ENCODE measurements at regions of chr14 and their contacts with region 1.

Region 1: DNA sequence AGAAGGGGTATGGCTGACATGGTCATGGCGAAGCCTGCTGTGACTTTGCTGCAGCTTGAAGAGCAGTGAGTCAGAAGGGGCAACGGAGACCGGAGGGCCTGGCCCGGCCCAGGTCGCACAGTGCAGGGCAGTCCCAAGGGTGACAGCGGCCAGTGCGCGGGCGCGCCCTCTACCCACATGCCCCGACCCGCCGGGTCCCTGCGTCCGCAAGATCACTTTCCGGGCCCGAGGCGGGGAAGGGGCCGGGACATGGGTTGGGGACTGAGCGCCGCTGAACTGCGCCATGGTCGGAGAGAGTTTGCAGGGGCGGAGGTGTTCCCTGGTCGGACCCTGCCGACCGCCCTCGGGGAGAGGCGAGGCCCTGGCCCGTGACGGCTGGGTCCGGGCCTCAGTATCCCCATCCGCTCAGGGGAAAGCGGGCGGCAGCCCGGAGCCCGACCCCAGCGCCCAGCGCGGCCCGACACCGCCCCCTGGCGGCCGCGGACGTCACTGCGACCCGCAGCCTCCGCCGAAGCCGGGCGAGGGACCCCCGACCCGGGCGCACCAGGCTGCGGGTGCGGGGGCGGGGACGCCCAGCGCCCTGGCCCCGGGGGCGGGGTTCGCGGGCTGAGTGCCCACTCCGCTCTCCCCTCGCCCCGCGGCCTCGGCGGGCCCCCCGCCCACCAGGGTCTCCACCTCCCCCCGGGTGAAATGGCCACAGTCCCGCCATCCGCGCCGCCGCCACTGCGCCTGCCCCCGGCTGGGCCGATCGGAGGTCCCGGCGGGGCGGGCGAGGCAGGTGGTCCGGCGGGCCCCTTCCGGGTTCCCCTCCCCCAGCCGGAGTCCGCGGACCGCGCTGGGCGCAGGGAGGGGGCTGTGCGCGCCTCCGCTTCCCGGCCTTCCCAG is 7.2 kb upstream of the ANKRD9 start:
- DNase-seq: peak; percentile 42
- H3K4me3 ChIP-seq: peak overlapping the region; percentile 46 to 56 (median 55)
- H3K27ac ChIP-seq: no peak overlapping the region
- H3K4me1 ChIP-seq: no peaks in the 10 kb centered on the region
- H3K27me3 ChIP-seq: no peaks in the 10 kb centered on the region
- CTCF ChIP-seq: peak; percentile 75 to 85
- POLR2A ChIP-seq: no peak

Region 2: DNA sequence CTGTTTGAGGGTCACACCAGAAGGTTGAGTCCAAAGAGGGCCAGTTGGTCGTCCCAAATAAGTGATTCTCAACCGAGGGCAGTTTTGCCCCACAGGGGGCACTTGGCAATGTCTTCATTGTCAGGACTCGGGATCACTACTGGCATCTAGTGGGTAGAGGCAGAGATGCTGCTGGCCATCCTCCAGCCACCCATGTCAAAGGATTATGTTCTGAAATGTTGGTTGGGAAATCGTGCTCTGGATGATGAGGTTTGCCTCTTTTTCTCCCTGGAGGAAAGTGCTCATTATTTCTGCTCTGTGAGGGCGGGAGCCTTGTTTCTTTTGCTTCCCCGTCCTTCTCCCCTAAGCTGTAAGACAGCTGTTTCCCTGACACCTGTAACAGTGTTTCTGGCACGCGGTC is 193.7 kb before region 1 on chr14:
- CTCF ChIA-PET with region 1: interaction called, 7 read pairs
- POLR2A ChIA-PET with region 1: no interaction called
- dilution Hi-C with region 1: no loop called
- intact Hi-C with region 1: loop called (anchors 2 kb)
- DNase-seq: peak; percentile 71
- H3K4me3 ChIP-seq: no peak overlapping the region
- H3K27ac ChIP-seq: no peak overlapping the region
- H3K4me1 ChIP-seq: peaks cover 10% of the 10 kb centered on the region
- H3K27me3 ChIP-seq: no peaks in the 10 kb centered on the region
- CTCF ChIP-seq: peak; percentile 60 to 79
- POLR2A ChIP-seq: no peak

Region 3: GRCh38 chr14:102408724-102409123 is 108.0 kb before region 1 on chr14:
- CTCF ChIA-PET with region 1: no interaction called
- POLR2A ChIA-PET with region 1: no interaction called
- dilution Hi-C with region 1: no loop called
- intact Hi-C with region 1: no loop called
- DNase-seq: no peak
- H3K4me3 ChIP-seq: no peak overlapping the region
- H3K27ac ChIP-seq: no peak overlapping the region
- H3K4me1 ChIP-seq: no peaks in the 10 kb centered on the region
- H3K27me3 ChIP-seq: no peaks in the 10 kb centered on the region
- CTCF ChIP-seq: no peak
- POLR2A ChIP-seq: no peak

Region 4: DNA sequence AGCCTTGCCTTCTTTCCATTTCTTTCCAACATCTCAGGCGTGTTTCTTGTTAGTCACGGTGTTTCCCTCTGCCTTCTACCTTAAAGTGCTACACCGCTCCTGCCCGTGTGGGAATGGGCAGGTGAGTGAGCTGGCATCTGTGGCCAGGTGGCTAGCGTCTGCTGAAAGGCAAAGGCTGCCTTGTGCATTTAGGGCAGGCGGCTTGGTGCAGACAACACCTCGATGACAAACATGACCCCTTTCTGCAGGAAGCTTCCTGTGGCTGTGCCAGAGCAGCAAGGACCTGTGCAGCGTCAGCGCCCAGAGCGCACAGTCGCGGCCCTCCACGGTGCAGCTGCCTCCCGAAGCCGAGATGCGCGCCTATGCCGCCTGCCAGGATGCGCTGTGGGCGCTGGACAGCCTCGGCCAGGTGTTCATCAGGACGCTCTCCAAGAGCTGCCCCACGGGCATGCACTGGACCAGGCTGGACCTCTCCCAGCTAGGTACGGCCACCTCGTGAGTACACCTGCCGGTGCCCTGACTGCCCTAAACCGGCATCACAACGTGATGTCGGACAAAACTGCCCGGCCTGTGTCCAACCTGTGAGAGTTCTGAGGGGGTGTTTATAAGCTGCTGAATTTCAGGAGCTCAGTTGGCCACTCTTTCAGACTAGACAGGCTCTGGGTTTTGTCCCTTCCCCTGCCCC is 64.5 kb before region 1 on chr14:
- CTCF ChIA-PET with region 1: interaction called, 11 read pairs
- POLR2A ChIA-PET with region 1: no interaction called
- dilution Hi-C with region 1: no loop called
- intact Hi-C with region 1: no loop called
- DNase-seq: no peak
- H3K4me3 ChIP-seq: no peak overlapping the region
- H3K27ac ChIP-seq: no peak overlapping the region
- H3K4me1 ChIP-seq: no peaks in the 10 kb centered on the region
- H3K27me3 ChIP-seq: no peaks in the 10 kb centered on the region
- CTCF ChIP-seq: no peak
- POLR2A ChIP-seq: no peak

Region 5: DNA sequence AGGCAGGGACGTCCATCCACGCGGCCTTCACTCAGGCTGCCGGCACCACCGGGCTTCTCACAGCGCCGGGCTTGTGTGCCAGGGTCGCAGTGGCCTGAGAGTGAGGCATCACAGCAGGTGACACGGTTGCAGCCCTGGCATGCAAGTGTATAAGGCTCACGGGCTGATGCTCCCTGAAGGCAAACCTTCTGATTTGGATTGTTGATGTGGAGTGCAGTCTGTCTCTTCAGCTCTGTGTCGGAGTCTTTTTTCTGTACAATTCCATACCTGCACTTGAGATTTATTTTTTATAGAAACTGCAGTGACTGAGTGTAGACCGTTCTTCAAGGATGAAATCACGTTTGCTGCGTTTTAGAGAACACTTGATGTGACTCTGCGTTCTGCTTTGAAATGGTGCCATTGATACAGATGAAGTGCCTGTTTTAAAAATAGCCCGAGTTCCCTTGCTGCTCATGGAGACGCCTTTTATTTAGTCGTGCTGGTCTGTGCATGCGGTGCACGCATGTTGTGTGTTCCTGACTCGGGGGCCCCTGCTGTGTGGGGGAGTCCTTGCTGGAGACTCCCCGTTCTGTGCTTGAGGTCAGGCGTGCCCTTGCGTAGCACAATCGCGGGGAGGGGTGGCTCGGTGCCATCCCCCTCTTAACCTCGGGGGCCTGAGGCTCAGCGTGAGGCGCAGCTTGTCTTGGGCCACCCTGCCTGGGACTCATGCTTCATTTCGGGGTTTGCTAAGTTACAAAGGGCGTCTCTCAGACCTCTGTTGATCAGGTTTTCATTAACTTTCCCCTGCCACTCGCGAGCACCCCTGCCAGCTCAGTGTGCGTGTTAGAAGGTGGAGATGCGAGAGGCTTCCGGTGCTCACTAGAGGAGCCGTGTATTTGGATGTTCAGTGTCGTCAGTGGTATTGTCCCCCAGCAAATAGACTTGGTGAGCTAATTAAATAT is 384.1 kb after region 1 on chr14:
- CTCF ChIA-PET with region 1: no interaction called
- POLR2A ChIA-PET with region 1: no interaction called
- dilution Hi-C with region 1: no loop called
- intact Hi-C with region 1: no loop called
- DNase-seq: no peak
- H3K4me3 ChIP-seq: no peak overlapping the region
- H3K27ac ChIP-seq: no peak overlapping the region
- H3K4me1 ChIP-seq: no peaks in the 10 kb centered on the region
- H3K27me3 ChIP-seq: no peaks in the 10 kb centered on the region
- CTCF ChIP-seq: no peak
- POLR2A ChIP-seq: no peak